ENCODE measurements at regions of chr9 and their contacts with region 1.

Region 1: GRCh38 chr9:130042833-130043653 is at the start of gene FNBP1:
- DNase-seq: peak; percentile 69 to 90 (median 80)
- ATAC-seq: peak; percentile 71
- H3K4me3 ChIP-seq: peak within 1 kb of the TSS; percentile 68 to 97
- H3K4me3 Mint-ChIP-seq: peak within 1 kb of the TSS; percentile 95
- H3K27ac ChIP-seq: peak within 1 kb of the TSS; percentile 82 to 84
- H3K27ac Mint-ChIP-seq: peak within 1 kb of the TSS; percentile 97
- H3K4me1 ChIP-seq: peaks cover 37% of the 10 kb centered on the region
- H3K4me1 Mint-ChIP-seq: peaks cover 58% of the 10 kb centered on the region
- H3K27me3 ChIP-seq: no peaks in the 10 kb centered on the region
- H3K27me3 Mint-ChIP-seq: no peaks in the 10 kb centered on the region
- CTCF ChIP-seq: no peak
- total RNA-seq, gene FNBP1: 169 to 194 TPM

Region 2: DNA sequence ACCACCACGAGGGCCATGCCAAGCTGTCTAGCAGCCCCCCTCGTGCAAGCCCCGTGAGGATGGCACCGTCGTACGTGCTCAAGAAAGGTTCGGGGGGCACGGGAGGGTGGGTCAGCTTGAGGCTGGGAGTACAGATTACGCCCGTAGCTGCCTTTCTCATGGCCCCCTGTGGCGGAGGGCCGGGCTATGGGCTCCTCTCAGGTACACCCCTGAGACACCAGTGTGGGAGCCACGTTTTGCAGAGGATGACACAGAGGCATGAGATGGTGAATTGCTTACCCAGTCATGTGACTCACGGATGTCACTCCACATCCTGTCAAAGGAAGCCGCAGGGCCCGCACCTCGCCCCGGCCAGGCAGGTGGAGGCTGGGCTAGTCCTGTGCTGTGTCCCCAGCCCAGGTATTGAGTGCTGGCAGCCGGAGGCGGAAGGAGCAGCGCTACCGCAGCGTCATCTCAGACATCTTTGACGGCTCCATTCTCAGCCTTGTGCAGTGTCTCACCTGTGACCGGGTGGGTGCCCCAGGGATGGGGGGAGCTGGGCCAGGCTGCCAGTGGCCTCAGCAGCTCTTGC is 174.0 kb before region 1 on chr9:
- CTCF ChIA-PET with region 1: no interaction called
- POLR2A ChIA-PET with region 1: interaction called, 8 read pairs
- intact Hi-C with region 1: loop called in 1 of 2 experiments (anchors 1 kb)
- DNase-seq: peak; percentile 85 to 97 (median 93)
- ATAC-seq: peak; percentile 87
- H3K4me3 ChIP-seq: peak overlapping the region; percentile 19 to 51
- H3K4me3 Mint-ChIP-seq: peak overlapping the region; percentile 65
- H3K27ac ChIP-seq: peak overlapping the region; percentile 85
- H3K27ac Mint-ChIP-seq: peak overlapping the region; percentile 95
- H3K4me1 ChIP-seq: peaks cover 80% of the 10 kb centered on the region
- H3K4me1 Mint-ChIP-seq: peaks cover 76% of the 10 kb centered on the region
- H3K27me3 ChIP-seq: no peaks in the 10 kb centered on the region
- H3K27me3 Mint-ChIP-seq: no peaks in the 10 kb centered on the region
- CTCF ChIP-seq: no peak

Region 3: GRCh38 chr9:129962889-129963703 is 79.9 kb before region 1 on chr9:
- CTCF ChIA-PET with region 1: interaction called, 3 read pairs
- POLR2A ChIA-PET with region 1: interaction called, 8 read pairs
- intact Hi-C with region 1: loop called (anchors 1 to 2 kb)
- DNase-seq: peak; percentile 54 to 94 (median 73)
- ATAC-seq: peak; percentile 93
- H3K4me3 ChIP-seq: peak overlapping the region; percentile 48 to 54
- H3K4me3 Mint-ChIP-seq: peak overlapping the region; percentile 87
- H3K27ac ChIP-seq: peak overlapping the region; percentile 81 to 93
- H3K27ac Mint-ChIP-seq: peak overlapping the region; percentile 97
- H3K4me1 ChIP-seq: peaks cover 47% of the 10 kb centered on the region
- H3K4me1 Mint-ChIP-seq: peaks cover 68% of the 10 kb centered on the region
- H3K27me3 ChIP-seq: no peaks in the 10 kb centered on the region
- H3K27me3 Mint-ChIP-seq: no peaks in the 10 kb centered on the region
- CTCF ChIP-seq: no peak

Region 4: DNA sequence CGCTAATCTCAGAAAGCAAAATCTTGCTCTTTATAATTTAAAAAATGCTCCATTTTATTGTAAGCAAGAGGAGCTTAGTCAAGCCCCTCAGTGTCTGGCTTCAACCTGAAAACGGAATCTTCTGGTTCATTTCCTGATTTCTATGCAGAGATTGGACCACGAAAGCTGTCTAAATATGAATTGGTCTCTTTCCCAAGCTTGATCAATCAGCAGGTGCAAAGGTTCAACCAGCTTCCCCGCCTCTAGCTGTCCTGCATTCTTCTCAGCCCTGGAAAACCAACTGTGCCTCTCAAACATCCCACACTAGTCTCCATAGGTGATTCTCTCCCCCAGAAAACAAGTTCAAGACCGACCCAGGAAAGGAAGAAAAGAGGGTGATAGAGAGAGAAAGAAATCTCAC is 34.5 kb before region 1 on chr9:
- CTCF ChIA-PET with region 1: interaction called, 3 read pairs
- POLR2A ChIA-PET with region 1: interaction called, 3 read pairs
- intact Hi-C with region 1: loop called (anchors 5 kb)
- DNase-seq: no peak
- ATAC-seq: no peak
- H3K4me3 ChIP-seq: no peak overlapping the region
- H3K4me3 Mint-ChIP-seq: peak overlapping the region; percentile 11
- H3K27ac ChIP-seq: peak overlapping the region in 1 of 2 experiments; percentile 73
- H3K27ac Mint-ChIP-seq: peak overlapping the region; percentile 93
- H3K4me1 ChIP-seq: peaks cover 38% of the 10 kb centered on the region
- H3K4me1 Mint-ChIP-seq: peaks cover 74% of the 10 kb centered on the region
- H3K27me3 ChIP-seq: no peaks in the 10 kb centered on the region
- H3K27me3 Mint-ChIP-seq: no peaks in the 10 kb centered on the region
- CTCF ChIP-seq: no peak

Region 5: GRCh38 chr9:130053504-130054324 is 10.7 kb after region 1 on chr9 and contains the start of gene GPR107:
- CTCF ChIA-PET with region 1: interaction called, 6 read pairs
- POLR2A ChIA-PET with region 1: interaction called, 25 read pairs
- intact Hi-C with region 1: loop called in 1 of 2 experiments (anchors 1 kb)
- DNase-seq: peak; percentile 46 to 87 (median 73)
- ATAC-seq: peak; percentile 96
- H3K4me3 ChIP-seq: peak within 1 kb of the TSS; percentile 94 to 99
- H3K4me3 Mint-ChIP-seq: peak within 1 kb of the TSS; percentile 92
- H3K27ac ChIP-seq: peak within 1 kb of the TSS; percentile 92 to 94
- H3K27ac Mint-ChIP-seq: peak within 1 kb of the TSS; percentile 93
- H3K4me1 ChIP-seq: peaks cover 26% of the 10 kb centered on the region
- H3K4me1 Mint-ChIP-seq: peaks cover 31% of the 10 kb centered on the region
- H3K27me3 ChIP-seq: no peaks in the 10 kb centered on the region
- H3K27me3 Mint-ChIP-seq: no peaks in the 10 kb centered on the region
- CTCF ChIP-seq: no peak
- total RNA-seq, gene GPR107: 23.7 to 25.2 TPM

Measured in CD8-positive, alpha-beta T cell (primary cell).